Activated CD8-positive, alpha-beta memory T cell treated with anti-CD3 and anti-CD28 coated beads, Interleukin-2, amount 10 ng/mL, durations not matched to agents 7 days and 5 days (primary cell): ENCODE measurements at regions of chr20 and their contacts with region 1.

Region 1: GRCh38 chr20:34312544-34313217 is 9.5 kb upstream of the AHCY start:
- DNase-seq: peak; percentile 92
- ATAC-seq: peak; percentile 100
- H3K4me3 Mint-ChIP-seq: no peak overlapping the region
- H3K27ac Mint-ChIP-seq: no peak overlapping the region
- H3K4me1 Mint-ChIP-seq: peaks cover 17% of the 10 kb centered on the region
- H3K27me3 Mint-ChIP-seq: peaks cover 27% of the 10 kb centered on the region

Region 2: DNA sequence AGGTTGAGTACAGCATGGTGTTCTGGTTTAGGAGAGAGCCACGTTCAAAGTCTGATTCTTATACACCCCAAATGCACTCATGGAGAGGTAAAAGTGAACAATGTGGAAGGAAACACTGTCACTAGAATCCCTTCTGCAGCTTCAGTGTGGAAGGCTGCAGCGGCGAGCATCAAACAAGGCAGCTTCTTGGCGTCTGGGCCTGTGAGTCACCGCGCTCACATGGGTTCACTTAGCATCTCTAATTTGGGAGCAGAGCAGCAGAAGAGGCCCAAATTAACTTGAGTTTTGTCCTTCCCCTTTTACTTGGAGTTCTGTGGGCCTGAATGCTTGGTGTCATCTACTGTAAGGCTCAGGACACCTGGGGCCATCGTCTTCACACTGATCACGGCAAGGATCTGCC is 615.6 kb before region 1 on chr20:
- CTCF ChIA-PET with region 1: no interaction called
- DNase-seq: no peak
- ATAC-seq: no peak
- H3K4me3 Mint-ChIP-seq: no peak overlapping the region
- H3K27ac Mint-ChIP-seq: no peak overlapping the region
- H3K4me1 Mint-ChIP-seq: no peaks in the 10 kb centered on the region
- H3K27me3 Mint-ChIP-seq: no peaks in the 10 kb centered on the region

Region 3: GRCh38 chr20:34256629-34257124 is 56.0 kb before region 1 on chr20:
- CTCF ChIA-PET with region 1: interaction called, 12 read pairs
- DNase-seq: no peak
- ATAC-seq: no peak
- H3K4me3 Mint-ChIP-seq: no peak overlapping the region
- H3K27ac Mint-ChIP-seq: no peak overlapping the region
- H3K4me1 Mint-ChIP-seq: no peaks in the 10 kb centered on the region
- H3K27me3 Mint-ChIP-seq: no peaks in the 10 kb centered on the region

Region 4: DNA sequence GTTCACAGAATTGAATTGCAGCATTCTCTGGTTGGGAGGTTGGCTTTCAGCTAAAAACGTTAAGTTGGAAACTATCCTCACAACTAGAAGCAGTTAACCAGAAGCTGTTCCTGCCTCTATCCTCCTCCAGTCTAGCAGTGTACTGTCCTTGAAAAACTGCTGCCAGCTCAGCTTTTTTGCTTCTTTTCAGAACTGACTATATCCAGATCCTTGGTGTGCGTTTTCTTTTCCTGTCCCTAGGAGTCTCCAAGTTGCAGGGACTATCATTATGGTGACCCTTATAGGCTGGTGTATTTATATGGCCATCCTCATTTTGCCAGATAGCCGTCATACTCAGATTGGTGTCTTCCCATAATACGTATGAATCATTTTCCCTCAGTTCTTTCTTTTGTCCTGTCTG is 55.9 kb after region 1 on chr20:
- CTCF ChIA-PET with region 1: interaction called, 26 read pairs
- DNase-seq: no peak
- ATAC-seq: no peak
- H3K4me3 Mint-ChIP-seq: no peak overlapping the region
- H3K27ac Mint-ChIP-seq: peak overlapping the region; percentile 82
- H3K4me1 Mint-ChIP-seq: peaks cover 62% of the 10 kb centered on the region
- H3K27me3 Mint-ChIP-seq: no peaks in the 10 kb centered on the region

Region 5: GRCh38 chr20:34437330-34437986 is 124.8 kb after region 1 on chr20:
- CTCF ChIA-PET with region 1: interaction called, 19 read pairs
- DNase-seq: no peak
- ATAC-seq: no peak
- H3K4me3 Mint-ChIP-seq: no peak overlapping the region
- H3K27ac Mint-ChIP-seq: peak overlapping the region; percentile 11
- H3K4me1 Mint-ChIP-seq: peaks cover 11% of the 10 kb centered on the region
- H3K27me3 Mint-ChIP-seq: no peaks in the 10 kb centered on the region

Region 6: DNA sequence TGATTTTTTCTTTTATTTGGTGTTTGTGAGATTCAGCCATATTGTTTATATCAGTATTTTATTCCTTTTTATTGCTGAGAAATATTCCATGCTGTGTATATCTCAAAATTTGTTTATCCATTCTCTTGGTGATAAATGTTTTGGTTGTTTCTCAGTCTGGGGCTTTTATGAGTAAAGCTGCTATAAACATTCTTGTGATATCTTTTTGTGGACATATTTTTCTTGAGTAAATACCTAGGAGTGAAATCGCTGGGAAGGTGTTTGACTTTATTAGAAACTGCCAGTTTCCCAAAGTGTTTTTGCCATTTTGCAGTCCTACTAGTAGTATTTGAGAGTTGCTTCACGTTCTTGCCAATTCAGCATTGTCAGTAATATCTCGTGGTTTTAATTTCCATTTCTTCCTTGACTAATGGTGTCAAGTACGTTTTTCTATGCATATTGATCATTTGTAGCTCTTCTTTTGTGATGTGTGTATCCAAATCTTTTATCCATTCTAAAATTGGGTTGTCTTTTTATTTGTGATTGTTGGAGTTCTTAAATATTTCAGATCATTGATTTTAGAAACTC is 172.5 kb after region 1 on chr20:
- CTCF ChIA-PET with region 1: interaction called, 15 read pairs
- DNase-seq: no peak
- ATAC-seq: no peak
- H3K4me3 Mint-ChIP-seq: no peak overlapping the region
- H3K27ac Mint-ChIP-seq: no peak overlapping the region
- H3K4me1 Mint-ChIP-seq: peaks cover under 1% of the 10 kb centered on the region
- H3K27me3 Mint-ChIP-seq: no peaks in the 10 kb centered on the region

Region 7: GRCh38 chr20:34538671-34539123 is 226.0 kb after region 1 on chr20:
- CTCF ChIA-PET with region 1: interaction called, 12 read pairs
- DNase-seq: peak; percentile 65
- ATAC-seq: peak; percentile 42
- H3K4me3 Mint-ChIP-seq: no peak overlapping the region
- H3K27ac Mint-ChIP-seq: no peak overlapping the region
- H3K4me1 Mint-ChIP-seq: peaks cover 9% of the 10 kb centered on the region
- H3K27me3 Mint-ChIP-seq: no peaks in the 10 kb centered on the region

Region 8: DNA sequence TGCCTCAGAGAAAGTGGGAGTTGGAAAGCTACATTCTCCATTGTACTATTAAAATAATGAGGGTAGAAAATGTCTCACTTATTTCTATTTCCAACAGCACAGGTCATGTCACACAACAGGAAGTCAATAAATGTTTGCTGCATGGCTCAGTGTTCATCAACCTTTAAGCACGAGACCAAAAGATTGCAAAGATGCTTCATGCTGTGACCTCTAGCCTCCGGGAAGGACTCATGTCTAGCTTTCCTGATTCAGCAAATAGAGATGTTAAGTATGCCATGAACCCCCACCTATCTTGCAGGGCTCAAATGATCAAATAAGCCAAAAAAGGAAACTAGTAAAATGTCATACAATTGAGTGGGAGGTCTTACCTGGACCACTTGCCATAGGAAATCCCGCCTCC is 455.4 kb after region 1 on chr20:
- CTCF ChIA-PET with region 1: interaction called, 65 read pairs
- DNase-seq: no peak
- ATAC-seq: no peak
- H3K4me3 Mint-ChIP-seq: no peak overlapping the region
- H3K27ac Mint-ChIP-seq: no peak overlapping the region
- H3K4me1 Mint-ChIP-seq: peaks cover 1% of the 10 kb centered on the region
- H3K27me3 Mint-ChIP-seq: no peaks in the 10 kb centered on the region